Ovary (tissue), 10 donors: ENCODE measurements at regions of chr10 and their contacts with region 1.

Region 1: GRCh38 chr10:17607603-17608332 is 9.4 kb downstream of the HACD1 start:
- DNase-seq: no peak
- H3K4me3 ChIP-seq: no peak overlapping the region
- H3K27ac ChIP-seq: no peak overlapping the region
- H3K4me1 ChIP-seq: no peaks in the 10 kb centered on the region
- H3K27me3 ChIP-seq: no peaks in the 10 kb centered on the region
- CTCF ChIP-seq: peak; percentile 54 to 82 (median 76)
- EP300 ChIP-seq: no peak
- POLR2A ChIP-seq: no peak

Region 2: GRCh38 chr10:17655567-17656146 is 47.9 kb after region 1 on chr10:
- intact Hi-C with region 1: no loop called
- DNase-seq: no peak
- H3K4me3 ChIP-seq: no peak overlapping the region
- H3K27ac ChIP-seq: no peak overlapping the region
- H3K4me1 ChIP-seq: no peaks in the 10 kb centered on the region
- H3K27me3 ChIP-seq: no peaks in the 10 kb centered on the region
- CTCF ChIP-seq: no peak
- EP300 ChIP-seq: no peak
- POLR2A ChIP-seq: no peak

Region 3: GRCh38 chr10:17737027-17737965 is 129.5 kb after region 1 on chr10:
- intact Hi-C with region 1: loop called (anchors 5 to 10 kb)
- DNase-seq: peak in 2 of 5 donors; percentile 27 to 35
- H3K4me3 ChIP-seq: no peak overlapping the region
- H3K27ac ChIP-seq: no peak overlapping the region
- H3K4me1 ChIP-seq: no peaks in the 10 kb centered on the region
- H3K27me3 ChIP-seq: no peaks in the 10 kb centered on the region
- CTCF ChIP-seq: peak in 2 of 3 donors; percentile 20 to 27
- EP300 ChIP-seq: no peak
- POLR2A ChIP-seq: no peak

Region 4: GRCh38 chr10:17742918-17743317 is 135.2 kb after region 1 on chr10:
- intact Hi-C with region 1: loop called (anchors 5 to 10 kb)
- DNase-seq: peak; percentile 46 to 73 (median 69)
- H3K4me3 ChIP-seq: no peak overlapping the region
- H3K27ac ChIP-seq: no peak overlapping the region
- H3K4me1 ChIP-seq: no peaks in the 10 kb centered on the region
- H3K27me3 ChIP-seq: no peaks in the 10 kb centered on the region
- CTCF ChIP-seq: peak; percentile 54 to 57 (median 57)
- EP300 ChIP-seq: no peak
- POLR2A ChIP-seq: no peak

Region 5: DNA sequence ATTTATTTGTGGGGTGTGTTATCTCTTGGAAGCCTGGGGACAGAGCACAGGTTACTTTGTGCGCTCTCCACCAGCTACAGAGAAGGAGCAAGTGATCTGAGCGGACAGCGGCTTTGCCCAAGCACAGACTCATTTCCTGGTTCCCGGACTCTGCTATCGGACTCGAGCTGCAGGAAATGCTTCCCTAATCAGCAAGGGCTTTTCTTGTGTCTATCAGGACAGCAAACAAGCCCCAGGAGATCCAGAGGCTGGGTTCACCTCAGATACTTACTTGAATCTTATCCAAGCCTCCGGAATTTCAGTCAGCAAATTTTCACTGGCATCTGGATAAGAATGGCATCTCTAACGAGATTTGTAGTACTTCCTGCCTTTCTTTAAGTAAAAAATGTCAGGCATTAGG is 229.2 kb after region 1 on chr10:
- intact Hi-C with region 1: loop called in 1 of 4 experiments (anchors 10 kb)
- DNase-seq: peak in 4 of 5 donors; percentile 20 to 40 (median 32)
- H3K4me3 ChIP-seq: no peak overlapping the region
- H3K27ac ChIP-seq: no peak overlapping the region
- H3K4me1 ChIP-seq: peaks cover 3% of the 10 kb centered on the region
- H3K27me3 ChIP-seq: no peaks in the 10 kb centered on the region
- CTCF ChIP-seq: no peak
- EP300 ChIP-seq: no peak
- POLR2A ChIP-seq: no peak

Region 6: GRCh38 chr10:18140957-18141845 is 533.4 kb after region 1 on chr10:
- intact Hi-C with region 1: no loop called
- DNase-seq: peak in 4 of 5 donors; percentile 41 to 63 (median 50)
- H3K4me3 ChIP-seq: peak overlapping the region; percentile 66
- H3K27ac ChIP-seq: peak overlapping the region; percentile 87 to 99
- H3K4me1 ChIP-seq: no peaks in the 10 kb centered on the region
- H3K27me3 ChIP-seq: no peaks in the 10 kb centered on the region
- CTCF ChIP-seq: no peak
- EP300 ChIP-seq: no peak
- POLR2A ChIP-seq: peak; percentile 4

Region 7: DNA sequence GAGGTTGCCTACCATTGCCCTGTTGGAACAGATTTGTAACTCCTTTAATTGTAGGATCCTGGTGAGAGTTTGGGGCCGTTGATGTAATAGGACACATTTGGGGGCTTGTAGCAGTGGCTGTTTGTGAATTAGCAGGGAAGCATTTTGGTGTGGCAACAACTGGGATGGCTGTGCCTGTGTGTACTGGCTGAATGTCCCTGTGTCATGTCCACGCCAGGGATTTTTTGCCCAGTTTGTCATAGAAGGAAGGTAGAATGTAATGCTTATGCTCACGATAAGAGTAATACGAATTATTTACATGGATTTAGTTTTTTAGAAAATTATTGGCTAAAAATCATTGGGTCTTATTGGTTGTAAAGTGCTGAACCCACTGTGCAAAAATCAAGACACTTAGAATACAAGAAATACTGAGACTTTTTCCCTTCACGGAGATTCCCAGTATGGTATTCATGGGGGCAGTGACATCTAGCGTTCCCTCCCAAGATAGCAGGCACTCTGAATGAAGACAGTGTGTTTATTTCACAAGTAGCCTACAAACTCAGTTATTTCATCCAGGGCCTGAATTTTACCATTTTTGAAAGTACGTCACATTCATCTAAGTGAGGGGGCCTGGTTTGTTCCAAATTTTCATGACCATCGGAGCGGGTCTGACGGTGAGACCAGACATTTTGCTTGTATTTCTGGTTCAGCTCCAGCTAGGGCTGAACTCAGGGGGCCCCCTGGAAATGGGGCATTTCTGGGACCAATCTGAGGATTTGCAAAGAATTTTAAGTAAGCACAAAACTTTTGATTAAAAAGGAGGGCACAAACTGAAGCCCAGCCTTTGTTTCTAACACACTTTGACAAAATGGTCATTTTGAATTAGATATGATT is 607.2 kb after region 1 on chr10:
- intact Hi-C with region 1: loop called in 1 of 4 experiments (anchors 5 kb)
- DNase-seq: peak; percentile 64 to 80 (median 69)
- H3K4me3 ChIP-seq: no peak overlapping the region
- H3K27ac ChIP-seq: peak overlapping the region in 1 of 2 donors; percentile 65
- H3K4me1 ChIP-seq: peaks cover 2% of the 10 kb centered on the region
- H3K27me3 ChIP-seq: no peaks in the 10 kb centered on the region
- CTCF ChIP-seq: peak; percentile 75 to 86 (median 84)
- EP300 ChIP-seq: no peak
- POLR2A ChIP-seq: no peak